Activated T-helper 1 cell treated with anti-CD3 and anti-CD28 coated beads, Interleukin-12 subunit alpha, Interleukin-12 subunit beta, Interleukin-2, Interleukin-4 antibody, amounts not matched to agents 30 ng/mL and 10 ng/mL and 1 ng/mL, durations not matched to agents 14 hours and 24 hours and 36 hours (primary cell): ENCODE measurements at regions of chr7 and their contacts with region 1.

Region 1: GRCh38 chr7:50379082-50379481 is 71.1 kb downstream of the FIGNL1 start:
- DNase-seq: no peak
- H3K4me3 Mint-ChIP-seq: no peak overlapping the region
- H3K27ac Mint-ChIP-seq: peak overlapping the region; percentile 69
- H3K4me1 Mint-ChIP-seq: peaks cover 93% of the 10 kb centered on the region
- H3K27me3 Mint-ChIP-seq: no peaks in the 10 kb centered on the region

Region 2: GRCh38 chr7:50389961-50390360 is 10.9 kb after region 1 on chr7:
- intact Hi-C with region 1: loop called (anchors 1 kb)
- DNase-seq: no peak
- H3K4me3 Mint-ChIP-seq: no peak overlapping the region
- H3K27ac Mint-ChIP-seq: peak overlapping the region; percentile 84
- H3K4me1 Mint-ChIP-seq: peaks cover 72% of the 10 kb centered on the region
- H3K27me3 Mint-ChIP-seq: no peaks in the 10 kb centered on the region